Gastrocnemius medialis (tissue), 4 donors: ENCODE measurements at regions of chr20 and their contacts with region 1.

Region 1: GRCh38 chr20:25390538-25391528 is at the start of gene ABHD12:
- DNase-seq: peak; percentile 90 to 95
- ATAC-seq: peak; percentile 94 to 95
- H3K4me3 ChIP-seq: peak within 1 kb of the TSS; percentile 72 to 99 (median 84)
- H3K27ac ChIP-seq: peak within 1 kb of the TSS; percentile 71 to 86 (median 84)
- H3K4me1 ChIP-seq: peaks cover 9 to 12% of the 10 kb centered on the region in 2 donors
- H3K27me3 ChIP-seq: no peaks in the 10 kb centered on the region
- CTCF ChIP-seq: no peak
- POLR2A ChIP-seq: peak; percentile 64 to 69
- total RNA-seq, gene ABHD12: 11.9 to 18.4 (median 13.8) TPM

Region 2: DNA sequence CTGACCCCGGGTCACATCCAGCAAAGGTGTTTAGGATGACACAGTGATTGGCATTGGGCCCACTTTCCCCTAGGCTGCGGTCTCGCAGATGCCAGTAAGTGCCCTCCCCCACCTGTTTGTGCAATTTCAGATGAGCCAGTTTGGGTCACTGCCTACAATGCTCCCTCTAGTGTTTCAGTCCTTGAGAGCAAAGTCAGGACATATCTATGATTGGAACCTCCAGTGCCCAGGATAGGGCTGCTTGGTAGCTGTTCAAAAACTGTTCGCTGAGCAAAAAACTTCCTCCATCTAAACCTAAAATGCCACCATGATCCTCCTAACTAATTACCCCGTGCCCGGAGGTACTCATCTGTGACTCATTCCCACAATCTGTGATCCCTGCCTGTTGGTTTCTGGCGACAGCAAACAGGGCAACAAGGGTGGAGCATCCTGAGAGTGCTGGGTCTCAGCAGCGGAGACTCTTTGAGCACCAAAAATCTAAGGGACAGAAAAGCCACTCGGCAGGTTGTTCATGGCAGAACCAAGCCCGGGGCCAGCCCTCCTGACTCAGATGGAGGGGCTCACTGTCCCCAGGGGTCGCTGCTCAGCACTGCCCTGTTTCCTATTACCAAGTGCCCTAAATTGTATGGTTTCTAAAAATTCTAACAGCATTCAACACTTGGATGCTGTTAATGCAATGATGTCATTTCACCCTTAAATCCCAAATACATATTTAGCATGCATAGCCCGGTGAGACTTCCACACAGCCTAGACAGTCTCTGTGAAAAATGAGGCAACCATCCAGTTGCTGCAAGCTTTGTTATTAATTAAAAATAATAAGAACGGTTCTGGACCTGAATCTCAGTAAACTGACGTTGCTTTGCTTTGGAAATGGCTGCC is 313.9 kb before region 1 on chr20:
- in situ Hi-C with region 1: no loop called
- intact Hi-C with region 1: loop called (anchors 5 kb)
- DNase-seq: peak in 1 of 2 donors; percentile 57
- ATAC-seq: peak; percentile 76 to 77
- H3K4me3 ChIP-seq: peak overlapping the region; percentile 41 to 52 (median 48)
- H3K27ac ChIP-seq: peak overlapping the region; percentile 56 to 70 (median 62)
- H3K4me1 ChIP-seq: peaks cover 16 to 19% of the 10 kb centered on the region in 2 donors
- H3K27me3 ChIP-seq: peaks cover 13 to 25% (median 23%) of the 10 kb centered on the region in 3 donors
- CTCF ChIP-seq: peak in 3 of 5 experiments; percentile 16 to 44 (median 22)
- POLR2A ChIP-seq: no peak

Region 3: GRCh38 chr20:25247956-25248785 is 142.7 kb before region 1 on chr20 and contains the start of gene PYGB:
- in situ Hi-C with region 1: loop called in 1 of 4 experiments (anchors 25 kb)
- intact Hi-C with region 1: loop called (anchors 2 kb)
- DNase-seq: peak; percentile 64 to 70
- ATAC-seq: peak; percentile 89 to 90
- H3K4me3 ChIP-seq: peak within 1 kb of the TSS; percentile 74 to 92 (median 84)
- H3K27ac ChIP-seq: peak within 1 kb of the TSS; percentile 79 to 92 (median 84)
- H3K4me1 ChIP-seq: peaks cover 24 to 38% of the 10 kb centered on the region in 2 donors
- H3K27me3 ChIP-seq: no peaks in the 10 kb centered on the region
- CTCF ChIP-seq: no peak
- POLR2A ChIP-seq: peak; percentile 79 to 83
- total RNA-seq, gene PYGB: 13.6 to 50.7 (median 27.0) TPM

Region 4: GRCh38 chr20:25294459-25295385 is 96.1 kb before region 1 on chr20:
- in situ Hi-C with region 1: loop called in 2 of 4 experiments (anchors 10 kb)
- intact Hi-C with region 1: no loop called
- DNase-seq: peak in 1 of 2 donors; percentile 48
- ATAC-seq: peak; percentile 19 to 28
- H3K4me3 ChIP-seq: no peak overlapping the region
- H3K27ac ChIP-seq: peak overlapping the region; percentile 46 to 85 (median 65)
- H3K4me1 ChIP-seq: peaks cover 26 to 32% of the 10 kb centered on the region in 2 donors
- H3K27me3 ChIP-seq: no peaks in the 10 kb centered on the region
- CTCF ChIP-seq: peak; percentile 51 to 80 (median 55)
- POLR2A ChIP-seq: no peak

Region 5: DNA sequence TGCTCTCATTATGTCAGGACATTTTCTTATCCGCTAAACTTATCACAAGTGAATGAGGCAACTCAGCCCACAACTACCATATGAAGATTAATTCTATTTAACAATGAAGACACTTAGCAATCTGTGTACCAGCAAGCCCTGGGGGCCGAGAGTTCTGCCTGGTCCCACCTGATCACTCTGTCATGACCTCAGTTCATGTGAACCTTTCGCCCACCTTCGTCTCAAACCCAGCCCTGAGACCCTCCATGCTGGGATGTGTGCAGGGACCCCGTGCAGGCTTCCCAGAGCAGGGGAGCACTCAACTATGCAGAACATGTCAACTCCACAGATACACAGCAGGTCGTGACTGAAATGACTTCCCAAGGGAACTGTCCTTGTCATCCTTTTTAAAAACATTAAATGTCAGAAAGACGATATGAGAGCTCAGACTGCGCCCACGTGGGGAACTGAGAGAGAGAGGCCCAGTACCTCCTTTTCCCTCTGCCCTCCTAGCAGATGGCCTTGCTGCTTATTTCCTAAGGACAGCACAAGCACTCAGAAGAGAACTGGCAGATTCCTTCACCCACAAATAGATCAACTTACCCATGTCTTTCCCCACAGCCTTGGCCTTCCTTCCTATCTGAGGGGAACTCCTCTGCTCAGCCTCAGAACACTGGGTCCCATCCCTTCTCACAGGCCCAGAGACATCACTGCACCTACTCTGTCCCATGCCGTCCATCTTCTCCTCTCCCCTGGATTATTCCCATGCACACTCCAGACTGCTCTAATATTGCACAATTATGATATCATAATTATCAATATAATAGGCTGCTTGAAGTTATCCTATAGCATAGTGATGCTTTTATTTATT is 11.7 kb before region 1 on chr20:
- in situ Hi-C with region 1: no loop called
- intact Hi-C with region 1: no loop called
- DNase-seq: no peak
- ATAC-seq: peak; percentile 32 to 46
- H3K4me3 ChIP-seq: no peak overlapping the region
- H3K27ac ChIP-seq: no peak overlapping the region
- H3K4me1 ChIP-seq: no peaks in the 10 kb centered on the region
- H3K27me3 ChIP-seq: no peaks in the 10 kb centered on the region
- CTCF ChIP-seq: no peak
- POLR2A ChIP-seq: no peak

Region 6: DNA sequence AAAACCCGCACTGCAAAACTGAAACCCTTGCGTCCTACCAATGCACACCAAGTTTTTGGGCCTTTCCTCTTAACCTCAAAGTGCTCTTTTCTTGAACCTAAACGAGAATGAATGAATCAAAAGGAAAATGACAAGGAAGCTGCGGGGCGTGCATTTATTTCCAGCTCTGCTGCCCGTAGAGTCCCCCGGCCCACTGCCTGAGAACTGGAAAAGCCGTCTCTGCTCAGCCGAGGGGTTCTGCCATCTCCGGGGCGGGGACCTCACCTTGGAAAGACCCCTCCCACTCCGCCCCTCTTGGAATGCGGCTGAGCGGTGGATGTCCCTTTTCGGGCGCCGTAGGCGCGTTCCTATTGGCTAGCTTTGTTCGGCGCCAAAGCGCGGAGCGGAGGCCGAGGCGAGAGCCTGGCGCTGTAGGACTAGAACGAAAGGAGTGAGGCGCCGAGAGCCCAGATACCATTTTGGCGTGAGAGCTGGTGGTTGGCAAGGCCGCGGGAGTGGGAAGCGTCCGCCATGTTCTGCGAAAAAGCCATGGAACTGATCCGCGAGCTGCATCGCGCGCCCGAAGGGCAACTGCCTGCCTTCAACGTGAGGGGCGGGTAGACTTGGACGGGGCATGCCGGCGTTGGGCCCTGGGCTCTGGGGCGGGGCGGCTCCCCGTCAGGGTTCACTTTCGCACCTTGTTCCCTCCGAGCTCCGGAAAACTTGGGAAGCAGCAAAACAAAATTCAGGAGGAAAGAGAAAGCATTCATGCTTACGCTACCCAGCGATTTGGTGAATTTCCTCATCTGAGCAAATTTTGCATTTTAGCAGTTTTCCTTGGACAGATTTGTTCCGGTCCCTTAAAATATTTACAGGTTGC is 16.7 kb after region 1 on chr20 and contains the start of gene GINS1:
- in situ Hi-C with region 1: no loop called
- intact Hi-C with region 1: loop called (anchors 1 kb)
- DNase-seq: peak; percentile 35 to 58
- ATAC-seq: peak; percentile 80 to 84
- H3K4me3 ChIP-seq: peak within 1 kb of the TSS; percentile 63 to 72 (median 68)
- H3K27ac ChIP-seq: peak within 1 kb of the TSS in 1 of 4 donors; percentile 0
- H3K4me1 ChIP-seq: peaks cover 6 to 7% of the 10 kb centered on the region in 2 donors
- H3K27me3 ChIP-seq: no peaks in the 10 kb centered on the region
- CTCF ChIP-seq: no peak
- POLR2A ChIP-seq: no peak
- total RNA-seq, gene GINS1: 0.07 to 0.20 TPM in 2 of 4 donors, not detected in the others

Region 7: GRCh38 chr20:25437153-25437581 is 46.3 kb after region 1 on chr20:
- in situ Hi-C with region 1: no loop called
- intact Hi-C with region 1: no loop called
- DNase-seq: no peak
- ATAC-seq: no peak
- H3K4me3 ChIP-seq: no peak overlapping the region
- H3K27ac ChIP-seq: no peak overlapping the region
- H3K4me1 ChIP-seq: no peaks in the 10 kb centered on the region
- H3K27me3 ChIP-seq: no peaks in the 10 kb centered on the region
- CTCF ChIP-seq: no peak
- POLR2A ChIP-seq: no peak

Region 8: DNA sequence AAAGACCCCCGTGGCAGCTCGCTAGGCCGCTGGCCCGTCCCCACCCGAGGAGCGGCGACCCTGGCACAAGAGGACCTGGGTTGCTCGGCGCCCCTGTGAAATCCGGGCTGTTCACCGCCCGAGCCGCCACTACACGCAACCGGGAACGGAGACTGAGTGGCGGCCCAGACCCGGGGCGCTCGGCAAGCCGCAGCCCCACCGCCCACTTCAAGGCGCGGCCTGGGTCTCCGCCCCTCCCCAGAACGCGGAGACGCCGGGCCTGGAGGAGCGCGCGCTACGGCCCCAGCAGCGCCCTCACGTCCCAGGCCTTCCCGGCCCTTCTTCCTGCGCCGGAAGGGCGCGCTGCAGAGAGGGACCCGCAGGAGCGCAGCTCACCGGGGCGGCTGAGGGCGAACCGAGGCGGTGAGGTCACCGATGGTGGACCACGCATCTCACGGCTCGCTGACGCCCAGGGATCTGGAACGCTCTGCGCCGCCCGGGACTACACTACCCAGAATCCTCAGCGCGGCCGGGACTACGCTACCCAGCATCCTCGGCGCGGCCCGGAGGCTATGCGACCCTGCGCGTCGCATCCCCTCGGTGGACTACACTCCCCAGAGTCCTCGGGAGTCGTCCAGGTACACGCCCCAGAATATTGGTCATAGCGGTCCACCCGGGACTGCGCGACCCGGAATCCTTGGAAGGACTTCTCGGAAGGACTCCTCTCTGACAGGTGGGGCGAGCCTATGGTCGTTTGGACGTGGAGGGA is 305.7 kb after region 1 on chr20 and contains the start of gene ZNF337:
- in situ Hi-C with region 1: loop called in 1 of 4 experiments (anchors 25 kb)
- intact Hi-C with region 1: loop called (anchors 5 kb)
- DNase-seq: peak; percentile 92 to 93
- ATAC-seq: peak; percentile 97
- H3K4me3 ChIP-seq: peak within 1 kb of the TSS; percentile 86 to 95 (median 92)
- H3K27ac ChIP-seq: peak within 1 kb of the TSS; percentile 80 to 92 (median 84)
- H3K4me1 ChIP-seq: peaks cover 8 to 11% of the 10 kb centered on the region in 2 donors
- H3K27me3 ChIP-seq: no peaks in the 10 kb centered on the region
- CTCF ChIP-seq: peak in 1 of 5 experiments; percentile 8
- POLR2A ChIP-seq: peak; percentile 73 to 83
- total RNA-seq, gene ZNF337: 7.1 to 9.4 (median 8.0) TPM